Heart left ventricle (tissue), 16 donors: ENCODE measurements at regions of chr6 and their contacts with region 1.

Region 1: DNA sequence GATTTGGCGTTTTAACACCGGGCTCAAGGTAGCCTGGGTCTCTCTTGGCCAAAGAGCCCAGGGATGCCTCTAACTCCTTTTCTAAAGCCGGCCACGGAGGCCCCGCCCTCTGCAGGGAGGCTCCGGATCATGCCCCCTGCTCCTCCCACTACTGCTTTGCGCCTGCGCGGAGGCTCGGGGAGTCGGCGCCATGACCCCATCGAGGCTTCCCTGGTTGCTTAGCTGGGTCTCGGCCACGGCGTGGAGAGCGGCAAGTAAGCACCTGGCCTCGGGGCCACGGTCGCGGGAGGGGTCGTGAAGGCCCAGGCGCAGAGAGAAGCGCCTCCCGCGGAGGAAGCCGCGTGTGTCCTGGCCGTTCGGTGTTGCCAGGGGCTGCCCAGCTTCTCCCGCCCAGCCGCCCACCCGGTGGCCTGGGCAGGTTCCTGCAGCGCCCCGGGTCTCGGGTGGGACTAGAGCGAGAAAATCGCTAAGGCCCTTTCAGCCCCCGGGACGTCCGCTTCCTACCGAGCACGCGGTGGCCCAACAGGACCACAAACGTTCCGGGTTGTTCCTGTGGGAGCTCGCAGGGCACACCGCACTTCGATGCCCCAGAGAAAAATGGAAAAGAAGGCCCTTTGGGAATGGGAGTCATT is at the start of gene SDHAF4:
- DNase-seq: peak; percentile 92 to 97 (median 96)
- ATAC-seq: peak; percentile 100
- H3K4me3 ChIP-seq: peak within 1 kb of the TSS; percentile 74 to 98 (median 79)
- H3K27ac ChIP-seq: peak within 1 kb of the TSS; percentile 53 to 96 (median 86)
- H3K4me1 ChIP-seq: peaks cover 0 to 15% (median 5%) of the 10 kb centered on the region in 12 donors
- H3K27me3 ChIP-seq: no peaks in the 10 kb centered on the region
- CTCF ChIP-seq: peak in 2 of 12 donors; percentile 24 to 26
- POLR2A ChIP-seq: peak in 1 of 2 donors; percentile 84
- total RNA-seq, gene SDHAF4: 8.8 to 21.3 (median 14.3) TPM

Region 2: GRCh38 chr6:70107852-70108629 is 458.8 kb before region 1 on chr6:
- intact Hi-C with region 1: no loop called
- DNase-seq: no peak
- ATAC-seq: no peak
- H3K4me3 ChIP-seq: no peak overlapping the region
- H3K27ac ChIP-seq: no peak overlapping the region
- H3K4me1 ChIP-seq: no peaks in the 10 kb centered on the region
- H3K27me3 ChIP-seq: no peaks in the 10 kb centered on the region
- CTCF ChIP-seq: peak; percentile 30 to 74 (median 60)
- POLR2A ChIP-seq: no peak

Region 3: GRCh38 chr6:70673601-70674000 is 106.7 kb after region 1 on chr6:
- intact Hi-C with region 1: loop called in 6 of 10 experiments (anchors 5 to 10 kb)
- DNase-seq: no peak
- ATAC-seq: peak in 1 of 4 donors; percentile 37
- H3K4me3 ChIP-seq: no peak overlapping the region
- H3K27ac ChIP-seq: peak overlapping the region in 4 of 12 donors; percentile 7 to 31 (median 16)
- H3K4me1 ChIP-seq: peaks cover 0 to 46% (median 33%) of the 10 kb centered on the region in 12 donors
- H3K27me3 ChIP-seq: no peaks in the 10 kb centered on the region
- CTCF ChIP-seq: no peak
- POLR2A ChIP-seq: no peak

Region 4: GRCh38 chr6:70686548-70687133 is 119.8 kb after region 1 on chr6:
- intact Hi-C with region 1: loop called in 2 of 10 experiments (anchors 1 to 2 kb)
- DNase-seq: no peak
- ATAC-seq: peak in 1 of 4 donors; percentile 67
- H3K4me3 ChIP-seq: no peak overlapping the region
- H3K27ac ChIP-seq: no peak overlapping the region
- H3K4me1 ChIP-seq: peaks cover 0 to 36% (median 22%) of the 10 kb centered on the region in 12 donors
- H3K27me3 ChIP-seq: no peaks in the 10 kb centered on the region
- CTCF ChIP-seq: peak; percentile 66 to 87 (median 83)
- POLR2A ChIP-seq: no peak

Region 5: DNA sequence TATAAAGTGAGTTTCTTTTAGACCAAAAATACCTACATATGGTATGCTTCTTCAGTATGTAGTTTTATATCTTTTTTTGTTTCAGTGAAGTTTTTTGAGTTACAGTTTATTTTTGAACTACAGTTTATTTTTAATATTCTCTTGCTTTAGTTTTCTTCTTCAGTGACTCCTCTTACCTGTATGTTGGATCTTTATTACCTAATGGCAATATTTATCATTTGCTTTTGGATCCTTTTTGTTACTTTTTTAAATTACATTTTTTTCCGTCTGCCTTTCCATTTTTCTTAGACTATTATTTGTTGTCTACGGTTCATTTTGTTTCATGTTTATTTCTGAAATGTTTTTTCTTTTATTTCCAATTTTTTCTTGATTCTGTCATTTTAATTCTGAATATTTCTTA is 172.7 kb after region 1 on chr6:
- intact Hi-C with region 1: no loop called
- DNase-seq: no peak
- ATAC-seq: no peak
- H3K4me3 ChIP-seq: no peak overlapping the region
- H3K27ac ChIP-seq: no peak overlapping the region
- H3K4me1 ChIP-seq: peaks cover 0 to 13% (median 0%) of the 10 kb centered on the region in 12 donors
- H3K27me3 ChIP-seq: no peaks in the 10 kb centered on the region
- CTCF ChIP-seq: no peak
- POLR2A ChIP-seq: no peak